ENCODE measurements at regions of chr10 and their contacts with region 1.

Region 1: GRCh38 chr10:117830787-117831212 is 215.9 kb downstream of the RAB11FIP2 start:
- DNase-seq: no peak
- ATAC-seq: no peak
- H3K4me3 ChIP-seq: no peak overlapping the region
- H3K27ac ChIP-seq: no peak overlapping the region
- H3K4me1 ChIP-seq: no peaks in the 10 kb centered on the region
- H3K27me3 ChIP-seq: peaks cover 0 to 20% (median 7%) of the 10 kb centered on the region in 7 donors
- CTCF ChIP-seq: no peak

Region 2: DNA sequence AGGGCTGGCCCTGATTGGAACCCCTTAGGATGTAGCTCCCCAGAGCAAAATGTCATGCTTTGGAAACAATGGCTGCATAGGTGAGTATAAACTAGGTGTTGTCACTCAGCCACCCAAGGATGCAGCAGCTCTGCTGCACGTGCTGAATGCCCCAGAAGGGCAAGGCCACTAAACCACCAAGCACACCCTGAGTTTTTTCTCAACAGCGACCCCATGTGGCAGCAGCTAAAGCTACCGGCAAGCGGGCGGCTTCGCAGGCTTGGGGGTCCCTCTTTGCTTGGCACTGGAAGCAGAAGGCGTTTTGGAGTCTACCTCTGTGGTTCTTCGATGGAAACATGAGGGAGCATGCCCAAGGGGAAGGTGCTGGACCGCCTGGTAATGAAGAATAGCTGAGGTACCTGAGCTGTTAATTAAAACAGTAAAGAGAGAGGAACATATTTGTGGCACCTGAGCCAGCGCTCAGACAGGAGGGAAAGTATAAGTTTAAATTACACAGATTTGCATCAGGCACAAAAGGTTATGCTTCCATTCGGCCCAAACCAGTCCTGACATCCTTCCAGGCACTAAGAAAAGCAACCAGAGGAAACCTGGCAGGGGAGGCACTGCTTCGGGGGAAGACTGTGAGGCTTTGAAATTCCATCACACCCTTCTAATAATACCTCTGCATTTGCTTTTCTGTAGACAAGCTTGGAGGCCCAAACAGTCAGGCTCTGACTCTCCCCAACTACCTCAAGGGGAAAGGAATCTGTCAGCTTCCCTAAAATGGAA is 1709.9 kb before region 1 on chr10:
- intact Hi-C with region 1: loop called in 1 of 10 experiments (anchors 10 kb)
- DNase-seq: no peak
- ATAC-seq: no peak
- H3K4me3 ChIP-seq: no peak overlapping the region
- H3K27ac ChIP-seq: no peak overlapping the region
- H3K4me1 ChIP-seq: no peaks in the 10 kb centered on the region
- H3K27me3 ChIP-seq: no peaks in the 10 kb centered on the region
- CTCF ChIP-seq: peak in 2 of 9 donors; percentile 16 to 20

Region 3: DNA sequence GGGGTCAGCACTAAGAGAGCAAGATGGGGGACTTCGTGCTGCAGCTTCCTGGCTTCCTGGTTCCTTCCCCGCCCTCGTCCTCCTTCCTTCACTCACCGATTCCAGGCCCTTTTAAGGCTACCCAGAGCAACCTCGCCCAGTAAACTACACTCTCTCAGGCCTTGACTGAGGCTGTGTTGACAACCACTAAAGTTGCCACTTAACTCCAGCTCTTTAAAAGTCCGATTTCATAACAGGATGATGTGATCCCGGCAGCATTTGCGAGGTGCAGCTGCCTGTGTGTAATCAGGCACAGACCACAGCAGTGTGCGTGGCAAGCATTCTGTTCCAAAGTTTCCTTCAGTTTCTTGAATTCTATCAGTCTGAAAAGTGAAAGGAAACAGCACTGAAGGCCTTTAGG is 105.3 kb after region 1 on chr10:
- intact Hi-C with region 1: no loop called
- DNase-seq: peak in 1 of 2 donors; percentile 47
- ATAC-seq: peak; percentile 87 to 96 (median 92)
- H3K4me3 ChIP-seq: no peak overlapping the region
- H3K27ac ChIP-seq: peak overlapping the region in 7 of 10 donors; percentile 26 to 66 (median 39)
- H3K4me1 ChIP-seq: peaks cover 0 to 11% (median 0%) of the 10 kb centered on the region in 9 donors
- H3K27me3 ChIP-seq: no peaks in the 10 kb centered on the region
- CTCF ChIP-seq: no peak

Region 4: DNA sequence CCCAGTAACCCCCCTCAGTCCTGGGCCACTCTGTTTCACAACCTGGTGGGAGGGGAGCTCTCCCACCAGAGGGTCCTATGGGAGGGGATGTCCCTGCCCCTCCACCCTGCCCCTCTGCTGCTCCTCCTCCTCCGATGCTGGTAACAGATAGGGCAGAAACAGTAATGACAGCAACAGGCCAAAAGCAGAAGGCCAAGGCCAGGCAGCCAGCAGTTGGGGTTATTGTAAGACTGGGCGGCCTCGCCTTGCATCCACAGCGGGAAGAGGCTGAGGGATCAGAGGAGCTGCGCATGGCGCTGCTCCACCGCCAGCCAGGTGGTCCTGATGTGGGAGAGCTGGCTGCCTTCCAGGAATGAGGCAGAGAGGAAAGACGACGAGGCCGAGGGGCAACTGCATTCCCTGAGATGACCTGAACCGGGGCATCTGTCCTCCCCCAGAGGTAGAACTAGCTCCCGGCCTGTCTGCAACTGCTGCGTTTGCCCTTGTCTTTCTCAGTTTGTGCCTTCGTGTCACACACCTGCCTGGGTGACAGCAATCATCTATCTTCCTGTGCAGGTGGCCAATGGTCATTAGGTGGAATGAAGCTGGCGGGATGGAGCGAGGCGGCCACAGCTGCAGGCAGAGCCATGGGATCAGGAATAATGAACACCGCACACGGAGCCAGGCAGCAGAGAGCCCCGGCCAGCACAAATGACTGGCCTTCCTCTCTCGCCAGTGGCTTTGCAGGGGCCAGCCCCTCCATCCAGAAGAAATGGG is 978.0 kb after region 1 on chr10:
- intact Hi-C with region 1: no loop called
- DNase-seq: no peak
- ATAC-seq: no peak
- H3K4me3 ChIP-seq: no peak overlapping the region
- H3K27ac ChIP-seq: no peak overlapping the region
- H3K4me1 ChIP-seq: no peaks in the 10 kb centered on the region
- H3K27me3 ChIP-seq: no peaks in the 10 kb centered on the region
- CTCF ChIP-seq: no peak

Measured in heart right ventricle (tissue), 16 donors.